ENCODE measurements at regions of chr12 and their contacts with region 1.

Region 1: GRCh38 chr12:10749700-10750384 is 26.7 kb upstream of the YBX3 start:
- DNase-seq: peak; percentile 79
- H3K4me3 ChIP-seq: peak overlapping the region in 1 of 2 donors; percentile 17
- H3K27ac ChIP-seq: peak overlapping the region; percentile 7 to 32
- H3K4me1 ChIP-seq: no peaks in the 10 kb centered on the region
- H3K27me3 ChIP-seq: no peaks in the 10 kb centered on the region
- CTCF ChIP-seq: peak; percentile 74 to 94 (median 91)
- POLR2A ChIP-seq: no peak

Region 2: DNA sequence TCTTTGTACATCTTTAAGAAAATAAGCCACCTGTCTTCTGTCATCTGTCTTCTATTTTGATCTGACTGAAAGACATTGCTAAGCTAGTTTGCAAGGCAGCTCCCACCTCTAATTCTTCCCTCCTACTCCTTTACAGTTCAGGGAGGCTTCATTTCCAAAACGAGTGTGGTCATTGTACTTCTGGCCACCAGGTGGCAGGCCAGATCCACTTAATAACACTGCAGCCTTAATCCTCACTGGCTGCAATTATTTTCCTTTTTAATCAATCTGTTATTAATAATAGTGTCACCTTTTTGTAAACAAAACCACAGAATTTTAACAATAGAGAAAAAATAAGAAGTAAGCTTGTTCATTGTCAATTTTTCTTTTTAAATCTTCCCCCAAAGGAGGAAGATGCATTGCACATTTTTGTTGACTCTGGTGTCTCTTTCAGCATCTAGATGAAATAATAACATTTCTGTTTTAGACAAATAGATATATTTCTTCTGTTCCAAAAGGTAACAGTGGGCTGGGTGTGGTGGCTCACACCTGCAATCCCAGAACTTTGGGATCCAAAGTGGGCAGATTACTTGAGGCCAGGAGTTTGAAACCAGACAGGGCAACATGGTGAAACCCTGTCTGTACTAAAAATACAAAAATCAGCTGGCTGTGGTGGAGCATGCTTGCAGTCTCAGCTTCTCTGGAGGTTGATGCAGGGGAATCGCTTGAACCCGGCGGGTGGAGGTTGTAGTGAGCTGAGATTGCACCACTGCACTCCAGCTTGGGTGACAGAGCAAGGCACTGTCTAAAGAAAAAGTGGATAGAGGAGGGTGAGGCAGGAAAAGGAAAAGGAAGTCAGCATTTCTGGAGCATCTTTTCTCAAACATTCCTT is 513.8 kb before region 1 on chr12:
- intact Hi-C with region 1: loop called (anchors 10 kb)
- DNase-seq: no peak
- H3K4me3 ChIP-seq: no peak overlapping the region
- H3K27ac ChIP-seq: no peak overlapping the region
- H3K4me1 ChIP-seq: no peaks in the 10 kb centered on the region
- H3K27me3 ChIP-seq: no peaks in the 10 kb centered on the region
- CTCF ChIP-seq: peak; percentile 77 to 86 (median 82)
- POLR2A ChIP-seq: no peak

Region 3: GRCh38 chr12:10600988-10601387 is 148.9 kb before region 1 on chr12:
- intact Hi-C with region 1: no loop called
- DNase-seq: no peak
- H3K4me3 ChIP-seq: no peak overlapping the region
- H3K27ac ChIP-seq: no peak overlapping the region
- H3K4me1 ChIP-seq: no peaks in the 10 kb centered on the region
- H3K27me3 ChIP-seq: no peaks in the 10 kb centered on the region
- CTCF ChIP-seq: no peak
- POLR2A ChIP-seq: no peak

Region 4: GRCh38 chr12:10613349-10614055 is 136.3 kb before region 1 on chr12 and contains the start of gene MAGOHB:
- intact Hi-C with region 1: loop called (anchors 5 kb)
- DNase-seq: peak; percentile 91
- H3K4me3 ChIP-seq: peak within 1 kb of the TSS; percentile 47 to 71
- H3K27ac ChIP-seq: peak within 1 kb of the TSS; percentile 78 to 88
- H3K4me1 ChIP-seq: no peaks in the 10 kb centered on the region
- H3K27me3 ChIP-seq: no peaks in the 10 kb centered on the region
- CTCF ChIP-seq: peak in 2 of 4 experiments; percentile 32 to 36
- POLR2A ChIP-seq: peak; percentile 91
- total RNA-seq, gene MAGOHB: 24.2 to 24.8 TPM

Region 5: GRCh38 chr12:10783252-10783651 is 33.4 kb after region 1 on chr12:
- intact Hi-C with region 1: no loop called
- DNase-seq: no peak
- H3K4me3 ChIP-seq: no peak overlapping the region
- H3K27ac ChIP-seq: no peak overlapping the region
- H3K4me1 ChIP-seq: no peaks in the 10 kb centered on the region
- H3K27me3 ChIP-seq: no peaks in the 10 kb centered on the region
- CTCF ChIP-seq: no peak
- POLR2A ChIP-seq: no peak